Heart left ventricle (tissue), 16 donors: ENCODE measurements at regions of chr17 and their contacts with region 1.

Region 1: GRCh38 chr17:43753493-43754129 is 5.0 kb downstream of the SOST start:
- DNase-seq: no peak
- ATAC-seq: no peak
- H3K4me3 ChIP-seq: no peak overlapping the region
- H3K27ac ChIP-seq: no peak overlapping the region
- H3K4me1 ChIP-seq: peaks cover 0 to 18% (median 9%) of the 10 kb centered on the region in 12 donors
- H3K27me3 ChIP-seq: peaks cover 0 to 32% (median 17%) of the 10 kb centered on the region in 9 donors
- CTCF ChIP-seq: no peak
- POLR2A ChIP-seq: no peak

Region 2: DNA sequence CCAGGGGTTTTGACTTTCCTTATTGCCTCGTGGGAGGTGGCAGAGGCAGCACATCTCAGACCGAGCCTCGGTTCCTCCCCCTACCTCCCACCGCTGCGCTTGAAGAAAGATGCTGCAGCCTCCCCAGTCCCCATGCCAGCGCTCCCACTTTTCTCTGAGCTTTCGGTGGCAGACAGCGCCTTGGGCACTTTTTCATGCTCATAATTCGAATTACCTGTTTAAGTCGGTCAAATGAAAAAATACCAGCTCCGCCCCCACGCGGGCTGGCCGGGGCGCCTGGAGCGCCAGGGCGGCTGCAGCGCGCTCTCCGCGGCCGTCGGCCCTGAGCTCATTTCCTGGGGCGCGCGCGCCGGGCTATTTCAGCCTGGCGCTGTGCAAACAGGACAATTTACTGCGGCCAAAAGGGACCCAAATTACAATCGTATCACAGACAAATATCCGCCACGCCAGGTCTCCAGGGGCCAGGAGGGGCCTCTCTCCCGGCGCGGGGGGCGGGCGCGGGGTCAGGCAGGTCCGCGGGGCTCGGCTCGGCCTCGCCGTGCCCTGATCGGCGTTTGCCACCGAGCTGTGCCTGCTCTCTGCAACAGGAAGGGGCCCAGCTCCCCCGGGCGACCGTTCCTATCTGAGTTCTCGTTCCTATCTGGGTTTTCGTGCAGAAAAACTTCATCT is 40.0 kb before region 1 on chr17:
- intact Hi-C with region 1: loop called in 1 of 10 experiments (anchors 5 kb)
- DNase-seq: peak; percentile 44 to 66 (median 49)
- ATAC-seq: peak in 3 of 4 donors; percentile 74 to 85 (median 77)
- H3K4me3 ChIP-seq: peak overlapping the region; percentile 8 to 65 (median 51)
- H3K27ac ChIP-seq: peak overlapping the region in 11 of 12 donors; percentile 23 to 76 (median 58)
- H3K4me1 ChIP-seq: peaks cover 0 to 22% (median 12%) of the 10 kb centered on the region in 12 donors
- H3K27me3 ChIP-seq: peaks cover 0 to 3% (median 0%) of the 10 kb centered on the region in 9 donors
- CTCF ChIP-seq: peak in 1 of 12 donors; percentile 16
- POLR2A ChIP-seq: no peak

Region 3: GRCh38 chr17:43900183-43900857 is 146.7 kb after region 1 on chr17:
- intact Hi-C with region 1: no loop called
- DNase-seq: peak; percentile 86 to 93 (median 90)
- ATAC-seq: peak; percentile 94 to 98 (median 97)
- H3K4me3 ChIP-seq: peak overlapping the region; percentile 5 to 64 (median 51)
- H3K27ac ChIP-seq: no peak overlapping the region
- H3K4me1 ChIP-seq: peaks cover 0 to 20% (median 12%) of the 10 kb centered on the region in 12 donors
- H3K27me3 ChIP-seq: peaks cover 0 to 3% (median 0%) of the 10 kb centered on the region in 9 donors
- CTCF ChIP-seq: no peak
- POLR2A ChIP-seq: no peak